Vagina (tissue), 2 donors: ENCODE measurements at regions of chr15 and their contacts with region 1.

Region 1: DNA sequence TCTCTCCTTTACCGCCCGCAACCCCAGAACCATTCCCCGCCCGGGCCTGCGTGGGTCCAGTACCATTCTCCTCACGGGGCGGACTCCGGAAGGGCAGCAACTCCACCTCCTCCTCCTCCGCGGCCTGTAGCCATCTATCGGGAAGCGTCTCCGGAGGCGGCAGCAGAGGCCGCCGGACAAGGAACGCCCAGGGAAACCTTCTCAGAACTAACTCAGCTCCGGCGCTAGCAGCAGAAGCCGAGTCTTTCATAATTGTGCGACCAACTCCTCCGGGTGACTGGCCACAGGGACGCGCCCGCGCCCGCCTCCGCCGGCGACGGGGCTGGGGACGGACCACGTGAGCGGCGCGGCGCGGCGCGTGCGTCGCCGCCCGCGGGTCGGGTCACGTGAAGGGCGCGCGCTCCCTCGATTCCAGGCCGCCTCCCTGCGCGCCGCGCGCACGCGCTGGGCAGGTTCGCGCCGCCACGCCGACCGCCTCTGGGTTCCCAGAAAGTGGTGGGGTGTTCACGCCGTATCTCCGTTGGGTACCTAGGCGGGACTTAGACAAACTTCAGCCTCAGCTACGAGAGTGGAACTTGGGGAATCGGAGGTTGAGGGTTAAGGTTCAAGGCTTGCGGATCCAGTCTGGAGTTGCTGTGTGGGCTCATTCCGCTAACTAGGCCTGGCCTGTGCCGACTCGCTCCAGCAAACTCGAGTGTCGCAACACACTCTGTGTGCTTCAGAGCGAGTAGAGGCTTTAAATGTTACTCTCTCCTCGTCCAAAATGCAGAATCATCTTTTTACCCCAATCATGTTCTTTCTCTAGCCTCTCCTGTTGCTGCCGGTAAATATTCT is at the start of gene TRPM7:
- DNase-seq: peak; percentile 94 to 96
- H3K4me3 ChIP-seq: peak within 1 kb of the TSS; percentile 83 to 87
- H3K27ac ChIP-seq: peak within 1 kb of the TSS; percentile 96
- H3K4me1 ChIP-seq: peaks cover 42% of the 10 kb centered on the region
- H3K27me3 ChIP-seq: no peaks in the 10 kb centered on the region
- CTCF ChIP-seq: no peak
- POLR2A ChIP-seq: peak in 1 of 2 donors; percentile 80
- total RNA-seq, gene TRPM7: 53.3 TPM

Region 2: DNA sequence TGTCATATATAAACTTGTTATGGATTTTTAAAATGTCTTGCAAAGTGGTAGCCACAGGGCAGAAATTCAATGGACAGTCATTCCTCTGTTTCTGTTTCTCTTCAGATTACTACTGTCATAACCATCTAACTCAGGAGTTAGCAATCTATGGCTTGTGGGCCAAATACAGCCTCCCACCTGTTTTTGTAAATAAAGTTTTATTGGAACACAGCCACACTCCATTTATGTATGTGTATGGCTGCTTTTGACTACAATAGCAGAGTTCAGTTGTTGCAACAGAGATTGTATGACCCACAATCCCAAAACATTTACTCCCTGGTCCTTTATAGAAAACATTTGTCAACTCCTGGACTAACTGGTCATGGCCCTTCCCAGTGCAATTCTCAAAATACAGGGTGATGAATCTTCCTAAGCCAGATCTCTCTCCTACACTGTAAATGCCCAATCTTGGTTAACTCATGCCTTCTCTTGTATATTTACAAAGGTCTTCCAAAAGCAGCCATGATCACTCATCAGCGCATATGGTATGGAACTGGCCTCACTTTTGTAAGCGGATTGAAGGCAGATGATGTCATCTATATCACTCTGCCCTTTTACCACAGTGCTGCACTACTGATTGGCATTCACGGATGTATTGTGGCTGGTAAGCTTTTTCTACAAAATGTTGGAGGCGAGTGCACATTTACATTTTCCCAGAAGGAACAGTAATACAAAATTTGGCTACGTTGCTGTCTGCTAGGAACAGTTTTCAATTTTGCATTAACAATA is 484.5 kb before region 1 on chr15:
- intact Hi-C with region 1: no loop called
- DNase-seq: no peak
- H3K4me3 ChIP-seq: no peak overlapping the region
- H3K27ac ChIP-seq: no peak overlapping the region
- H3K4me1 ChIP-seq: no peaks in the 10 kb centered on the region
- H3K27me3 ChIP-seq: no peaks in the 10 kb centered on the region
- CTCF ChIP-seq: no peak
- POLR2A ChIP-seq: no peak

Region 3: DNA sequence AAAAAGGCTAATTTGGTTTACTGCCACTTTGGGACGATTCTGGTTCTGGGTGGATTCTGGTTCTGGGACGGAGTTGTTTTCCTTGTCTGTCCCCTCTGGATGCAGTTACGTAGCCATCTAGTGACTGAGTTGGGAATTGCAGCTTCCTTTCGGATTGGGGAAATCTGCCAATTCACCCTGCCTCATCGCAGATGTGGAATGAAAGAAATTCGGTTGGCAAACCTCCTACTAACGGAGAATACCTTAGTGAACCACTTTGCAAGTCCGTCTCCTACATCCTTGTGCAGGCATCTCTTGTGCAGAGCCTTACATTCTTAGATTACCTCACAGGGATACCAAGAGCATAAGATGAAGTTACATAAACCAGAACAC is 190.3 kb after region 1 on chr15:
- intact Hi-C with region 1: loop called (anchors 10 kb)
- DNase-seq: no peak
- H3K4me3 ChIP-seq: peak overlapping the region; percentile 21 to 34
- H3K27ac ChIP-seq: no peak overlapping the region
- H3K4me1 ChIP-seq: peaks cover 5% of the 10 kb centered on the region
- H3K27me3 ChIP-seq: no peaks in the 10 kb centered on the region
- CTCF ChIP-seq: peak; percentile 67 to 92 (median 90)
- POLR2A ChIP-seq: no peak

Region 4: GRCh38 chr15:50908210-50909009 is 221.7 kb after region 1 on chr15 and contains the start of gene AP4E1:
- intact Hi-C with region 1: loop called (anchors 10 kb)
- DNase-seq: peak in 1 of 2 donors; percentile 94
- H3K4me3 ChIP-seq: peak within 1 kb of the TSS; percentile 79 to 94
- H3K27ac ChIP-seq: peak within 1 kb of the TSS; percentile 96
- H3K4me1 ChIP-seq: peaks cover 33% of the 10 kb centered on the region
- H3K27me3 ChIP-seq: no peaks in the 10 kb centered on the region
- CTCF ChIP-seq: peak; percentile 87 to 99 (median 99)
- POLR2A ChIP-seq: peak in 1 of 2 donors; percentile 48
- total RNA-seq, gene AP4E1: 7.4 TPM